ENCODE measurements at regions of chr11 and their contacts with region 1.

Region 1: GRCh38 chr11:47917643-47918369 is 62.6 kb upstream of the PTPRJ start:
- DNase-seq: peak; percentile 50 to 92
- H3K4me3 ChIP-seq: no peak overlapping the region
- H3K27ac ChIP-seq: no peak overlapping the region
- H3K4me1 ChIP-seq: peaks cover 41% of the 10 kb centered on the region
- H3K27me3 ChIP-seq: no peaks in the 10 kb centered on the region
- CTCF ChIP-seq: no peak

Region 2: GRCh38 chr11:47863189-47863892 is 54.5 kb before region 1 on chr11:
- CTCF ChIA-PET with region 1: no interaction called
- POLR2A ChIA-PET with region 1: interaction called, 5 read pairs
- intact Hi-C with region 1: loop called (anchors 2 kb)
- DNase-seq: no peak
- H3K4me3 ChIP-seq: no peak overlapping the region
- H3K27ac ChIP-seq: no peak overlapping the region
- H3K4me1 ChIP-seq: peaks cover 16% of the 10 kb centered on the region
- H3K27me3 ChIP-seq: no peaks in the 10 kb centered on the region
- CTCF ChIP-seq: no peak

Measured in PC-9 (cell line).